ENCODE measurements at regions of chr1 and their contacts with region 1.

Region 1: DNA sequence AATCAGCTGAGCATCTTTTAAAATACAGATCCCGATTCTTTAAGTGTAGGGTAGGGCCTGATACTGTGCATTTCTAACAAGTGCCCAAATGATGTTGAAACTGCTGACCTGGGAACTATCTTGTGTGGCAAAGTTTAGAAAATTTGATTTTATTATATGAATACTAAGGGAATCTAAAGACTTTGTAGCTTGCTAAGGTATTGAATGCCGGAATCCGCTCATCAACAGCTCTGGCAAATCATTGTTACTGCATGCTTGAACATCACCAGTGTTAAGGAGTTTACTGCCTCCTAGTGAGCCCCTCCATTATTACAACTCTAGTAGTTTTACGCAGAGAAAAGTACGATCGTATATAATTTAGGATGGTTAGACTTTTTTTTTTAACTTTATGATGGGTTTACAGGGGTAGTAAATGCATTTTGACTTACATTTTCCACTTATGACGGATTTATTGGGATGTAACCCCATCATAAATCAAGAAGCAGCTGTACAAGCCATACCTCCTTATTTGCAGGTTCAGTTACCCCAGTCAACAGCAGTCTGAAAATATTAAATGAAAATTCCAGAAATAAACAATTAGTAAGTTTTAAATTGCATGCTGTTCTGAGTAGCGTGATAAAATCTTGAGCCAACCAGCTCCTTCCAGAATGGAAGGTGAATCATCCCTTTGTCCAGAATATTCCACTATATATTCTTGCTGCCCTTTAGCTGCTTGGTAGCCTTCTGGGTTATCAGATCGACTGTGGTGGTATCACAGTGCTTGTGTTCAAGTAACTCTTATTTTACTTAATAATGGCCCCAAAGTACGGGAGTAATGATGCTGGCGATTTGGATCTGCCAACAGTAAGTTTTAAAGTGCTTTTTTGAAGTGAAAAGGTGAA is 892 bp downstream of the TYW3 start:
- DNase-seq: peak; percentile 46
- ATAC-seq: peak; percentile 69
- H3K4me3 Mint-ChIP-seq: peak overlapping the region; percentile 81
- H3K27ac Mint-ChIP-seq: peak overlapping the region; percentile 99
- H3K4me1 Mint-ChIP-seq: peaks cover 38% of the 10 kb centered on the region
- H3K27me3 Mint-ChIP-seq: no peaks in the 10 kb centered on the region
- CTCF ChIP-seq: peak; percentile 80

Region 2: GRCh38 chr1:74197657-74198552 is 535.9 kb before region 1 on chr1 and contains the starts of genes FPGT and LRRIQ3:
- CTCF ChIA-PET with region 1: no interaction called
- POLR2A ChIA-PET with region 1: no interaction called
- intact Hi-C with region 1: loop called (anchors 10 kb)
- DNase-seq: peak; percentile 94
- ATAC-seq: peak; percentile 97
- H3K4me3 Mint-ChIP-seq: peak within 1 kb of the TSS; percentile 85
- H3K27ac Mint-ChIP-seq: peak within 1 kb of the TSS; percentile 94
- H3K4me1 Mint-ChIP-seq: peaks cover 13% of the 10 kb centered on the region
- H3K27me3 Mint-ChIP-seq: no peaks in the 10 kb centered on the region
- CTCF ChIP-seq: no peak
- total RNA-seq, gene FPGT: 7.2 to 9.7 TPM
- total RNA-seq, gene LRRIQ3: 0.96 to 1.1 TPM

Measured in activated CD8-positive, alpha-beta T cell treated with anti-CD3 and anti-CD28 coated beads for 36 hours (primary cell).